ENCODE measurements at regions of chr20 and their contacts with region 1.

Region 1: DNA sequence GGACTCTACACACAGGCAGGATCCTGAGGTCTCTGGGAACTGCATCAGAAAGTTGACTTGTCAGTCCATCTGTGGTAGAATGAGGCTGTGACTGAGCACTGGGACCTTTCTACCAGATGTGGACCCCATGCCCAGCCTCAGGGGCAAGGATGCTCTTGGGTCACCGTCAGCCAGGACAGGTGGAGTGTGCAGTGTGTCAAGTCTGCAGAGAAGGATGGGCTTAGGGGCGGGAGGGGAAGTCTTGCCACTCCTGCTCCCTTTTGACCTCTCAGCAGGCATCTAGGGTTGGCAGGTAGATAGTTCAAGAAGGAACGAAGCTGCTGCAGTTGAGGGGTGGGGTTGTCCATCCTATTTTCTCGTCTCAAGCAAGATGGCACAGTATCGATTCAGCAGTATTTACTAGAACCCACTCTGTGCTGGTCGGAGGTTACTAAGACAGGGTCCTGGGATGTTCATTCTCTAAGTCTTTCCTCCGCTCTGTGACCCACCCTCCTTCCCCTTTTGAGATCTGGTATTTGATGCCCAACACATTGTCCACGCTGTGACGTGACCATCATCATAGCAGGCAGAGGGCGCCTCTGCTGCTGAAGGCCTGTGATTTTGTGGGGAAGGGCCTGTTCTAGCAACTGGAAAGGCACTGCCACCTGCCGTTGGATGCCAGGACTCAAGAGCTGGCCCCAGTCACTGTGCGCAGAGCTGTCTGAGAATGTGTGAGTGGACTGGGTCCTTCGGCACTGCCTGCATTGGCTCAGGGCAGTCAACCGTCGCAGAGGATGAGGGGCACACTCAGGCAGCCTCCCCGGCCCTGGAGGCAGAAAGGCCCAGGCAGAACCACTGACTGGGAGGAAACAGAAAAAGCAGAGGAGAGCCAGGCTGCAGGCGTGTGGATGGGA is 23.2 kb downstream of the RBCK1 start:
- DNase-seq: peak; percentile 42
- H3K4me3 ChIP-seq: no peak overlapping the region
- CTCF ChIP-seq: peak; percentile 70

Region 2: DNA sequence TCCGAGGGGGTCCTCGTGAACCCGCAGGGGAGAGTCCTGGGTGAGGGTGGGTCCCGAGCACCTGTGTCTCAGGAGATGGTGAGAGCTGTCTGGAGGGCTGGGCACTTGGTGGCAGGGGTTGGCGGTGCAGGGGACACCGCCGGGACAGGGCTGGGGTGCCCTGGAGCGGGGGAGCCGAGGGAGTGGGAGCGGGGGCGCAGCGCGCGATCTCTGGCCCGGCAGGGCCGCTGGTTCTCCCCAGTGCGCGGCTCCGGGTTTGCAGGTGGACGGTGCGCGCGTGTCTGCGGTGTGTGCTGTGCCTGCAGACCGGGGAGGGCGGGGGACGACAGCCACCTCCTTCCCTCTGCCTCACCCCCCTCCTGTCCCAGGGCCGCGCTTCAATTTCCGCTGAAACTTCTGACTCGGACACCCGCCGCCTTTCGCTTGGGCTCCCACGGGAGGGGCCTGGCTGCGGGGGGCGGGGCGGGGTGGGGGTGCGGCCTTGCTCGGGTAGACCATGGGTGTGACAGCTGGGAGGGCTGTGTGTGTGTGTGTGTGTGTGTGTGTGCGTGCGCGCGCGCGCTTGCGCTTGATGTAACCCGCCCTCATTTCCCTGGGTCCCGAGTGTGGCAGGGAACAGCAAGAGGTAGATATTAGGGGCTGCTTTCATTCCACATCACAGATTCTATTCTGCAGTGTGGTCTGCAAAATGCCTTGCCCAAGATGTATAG is 49.5 kb before region 1 on chr20:
- in situ Hi-C with region 1: loop called (anchors 5 kb)
- DNase-seq: no peak
- H3K4me3 ChIP-seq: peak overlapping the region; percentile 51
- CTCF ChIP-seq: no peak

Region 3: DNA sequence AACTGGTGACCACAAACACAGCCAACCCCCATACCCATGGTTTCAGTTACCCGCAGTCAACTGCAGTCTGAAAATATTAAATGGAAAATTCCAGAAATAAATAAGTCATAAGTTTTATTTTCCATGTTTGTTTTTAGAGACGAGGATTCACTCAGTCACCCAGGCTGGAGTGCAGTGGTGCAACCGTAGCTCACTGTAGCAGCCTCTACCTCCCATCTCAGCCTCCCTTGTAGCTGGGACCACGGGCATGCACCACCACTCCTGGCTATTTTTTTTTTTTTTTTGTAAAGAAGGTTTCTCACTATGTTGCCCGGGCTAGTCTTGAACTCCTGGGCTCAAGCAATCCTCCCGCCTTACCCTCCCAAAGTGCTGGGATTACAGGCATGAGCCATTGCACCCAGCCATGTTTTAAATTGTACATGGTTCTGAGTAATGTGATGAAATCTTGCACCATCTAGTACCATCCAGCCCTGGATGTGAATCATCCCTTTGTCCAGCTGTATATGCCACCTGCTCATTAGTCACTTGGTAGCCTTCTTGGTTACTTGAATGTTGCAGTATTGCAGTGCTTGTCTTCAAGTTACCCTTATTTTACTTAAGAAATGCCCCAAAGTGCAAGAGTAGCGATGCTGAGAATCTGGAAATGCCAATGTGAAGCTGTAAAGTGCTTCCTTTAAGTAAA is 97.8 kb after region 1 on chr20:
- in situ Hi-C with region 1: no loop called
- DNase-seq: no peak
- H3K4me3 ChIP-seq: no peak overlapping the region
- CTCF ChIP-seq: no peak

Measured in astrocyte of the cerebellum (primary cell).